ENCODE measurements at regions of chr1 and their contacts with region 1.

Region 1: GRCh38 chr1:116472431-116472961 is 98.3 kb downstream of the CD58 start:
- DNase-seq: no peak
- ATAC-seq: no peak
- H3K4me3 ChIP-seq: no peak overlapping the region
- H3K27ac ChIP-seq: no peak overlapping the region
- H3K4me1 ChIP-seq: peaks cover 27 to 32% of the 10 kb centered on the region in 2 donors
- H3K27me3 ChIP-seq: no peaks in the 10 kb centered on the region
- CTCF ChIP-seq: no peak
- POLR2A ChIP-seq: no peak

Region 2: DNA sequence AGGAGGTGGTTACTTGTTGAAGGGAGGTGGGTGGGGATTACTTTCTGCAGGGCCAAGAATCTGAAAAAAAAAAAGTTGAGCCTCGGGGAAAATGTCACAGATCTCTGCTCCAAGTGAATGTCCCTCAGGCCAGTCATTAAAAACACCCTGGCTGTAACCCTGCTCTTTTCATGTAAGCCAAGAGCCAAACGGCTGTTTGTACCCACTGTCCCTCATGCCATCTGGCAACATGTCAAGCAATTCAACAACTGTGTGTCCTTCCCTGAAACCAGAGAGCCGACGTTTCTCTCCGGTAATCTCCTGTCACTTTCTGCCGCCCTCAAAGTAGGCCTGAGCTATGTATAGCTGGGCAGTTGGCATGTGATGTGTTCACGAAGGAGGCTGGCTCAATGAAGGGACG is 718.7 kb before region 1 on chr1:
- in situ Hi-C with region 1: no loop called
- intact Hi-C with region 1: loop called (anchors 10 kb)
- DNase-seq: peak; percentile 94
- ATAC-seq: peak; percentile 89 to 90
- H3K4me3 ChIP-seq: peak overlapping the region in 2 of 4 donors; percentile 3 to 13
- H3K27ac ChIP-seq: peak overlapping the region; percentile 87 to 91 (median 90)
- H3K4me1 ChIP-seq: peaks cover 65 to 78% of the 10 kb centered on the region in 2 donors
- H3K27me3 ChIP-seq: no peaks in the 10 kb centered on the region
- CTCF ChIP-seq: no peak
- POLR2A ChIP-seq: peak in 1 of 2 donors; percentile 42

Region 3: DNA sequence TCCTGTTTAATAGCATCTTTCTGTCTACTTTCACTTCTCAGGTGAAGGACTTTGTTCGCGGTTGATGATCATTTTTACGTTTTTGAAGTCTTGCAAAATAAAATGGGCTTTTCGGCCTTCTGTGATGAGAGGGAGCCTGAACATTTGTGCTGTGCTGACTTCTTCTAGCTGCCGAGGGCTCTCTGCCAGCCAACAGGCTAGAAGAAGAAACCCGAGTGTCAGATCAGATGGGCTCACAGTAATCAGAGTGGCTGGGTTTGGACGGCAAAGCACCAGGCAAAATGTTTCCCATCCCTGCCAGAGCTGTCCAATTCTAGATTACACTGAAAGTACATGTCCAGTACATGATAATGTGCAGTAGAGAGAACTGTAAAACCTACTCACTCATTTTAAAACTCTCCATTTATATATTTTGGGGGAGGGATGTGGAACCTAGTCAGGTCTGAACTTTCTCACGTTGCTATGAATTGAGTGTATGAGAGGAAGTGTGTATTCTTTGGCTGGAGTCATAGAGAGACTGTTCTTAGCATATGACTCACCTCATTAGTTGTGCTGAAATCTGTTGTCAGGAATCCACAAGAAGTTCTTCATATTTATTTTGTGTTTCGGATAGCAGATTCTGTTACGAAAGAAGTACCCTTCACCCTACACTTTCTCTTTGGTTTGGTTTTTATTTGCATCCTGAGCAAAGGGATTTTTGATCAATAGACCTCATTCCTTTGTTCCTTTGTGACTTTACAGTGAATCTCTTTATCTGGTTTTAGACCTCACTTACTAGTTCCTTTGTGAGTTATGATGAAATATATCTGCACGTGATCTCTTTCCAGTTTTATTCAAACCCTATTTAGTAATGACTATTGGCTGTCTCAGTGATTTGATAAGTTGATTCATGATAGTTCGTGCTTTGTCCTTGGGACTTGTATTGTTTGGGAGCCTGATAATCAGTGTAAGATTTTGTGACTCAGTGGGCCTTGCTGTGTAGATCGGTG is 94.7 kb before region 1 on chr1:
- in situ Hi-C with region 1: loop called in 1 of 4 experiments (anchors 25 kb)
- intact Hi-C with region 1: loop called (anchors 1 kb)
- DNase-seq: peak; percentile 77 to 88
- ATAC-seq: peak; percentile 64 to 70
- H3K4me3 ChIP-seq: peak overlapping the region; percentile 8 to 84 (median 26)
- H3K27ac ChIP-seq: peak overlapping the region; percentile 94 to 98 (median 96)
- H3K4me1 ChIP-seq: peaks cover 69 to 85% of the 10 kb centered on the region in 2 donors
- H3K27me3 ChIP-seq: no peaks in the 10 kb centered on the region
- CTCF ChIP-seq: no peak
- POLR2A ChIP-seq: peak; percentile 74 to 75

Region 4: DNA sequence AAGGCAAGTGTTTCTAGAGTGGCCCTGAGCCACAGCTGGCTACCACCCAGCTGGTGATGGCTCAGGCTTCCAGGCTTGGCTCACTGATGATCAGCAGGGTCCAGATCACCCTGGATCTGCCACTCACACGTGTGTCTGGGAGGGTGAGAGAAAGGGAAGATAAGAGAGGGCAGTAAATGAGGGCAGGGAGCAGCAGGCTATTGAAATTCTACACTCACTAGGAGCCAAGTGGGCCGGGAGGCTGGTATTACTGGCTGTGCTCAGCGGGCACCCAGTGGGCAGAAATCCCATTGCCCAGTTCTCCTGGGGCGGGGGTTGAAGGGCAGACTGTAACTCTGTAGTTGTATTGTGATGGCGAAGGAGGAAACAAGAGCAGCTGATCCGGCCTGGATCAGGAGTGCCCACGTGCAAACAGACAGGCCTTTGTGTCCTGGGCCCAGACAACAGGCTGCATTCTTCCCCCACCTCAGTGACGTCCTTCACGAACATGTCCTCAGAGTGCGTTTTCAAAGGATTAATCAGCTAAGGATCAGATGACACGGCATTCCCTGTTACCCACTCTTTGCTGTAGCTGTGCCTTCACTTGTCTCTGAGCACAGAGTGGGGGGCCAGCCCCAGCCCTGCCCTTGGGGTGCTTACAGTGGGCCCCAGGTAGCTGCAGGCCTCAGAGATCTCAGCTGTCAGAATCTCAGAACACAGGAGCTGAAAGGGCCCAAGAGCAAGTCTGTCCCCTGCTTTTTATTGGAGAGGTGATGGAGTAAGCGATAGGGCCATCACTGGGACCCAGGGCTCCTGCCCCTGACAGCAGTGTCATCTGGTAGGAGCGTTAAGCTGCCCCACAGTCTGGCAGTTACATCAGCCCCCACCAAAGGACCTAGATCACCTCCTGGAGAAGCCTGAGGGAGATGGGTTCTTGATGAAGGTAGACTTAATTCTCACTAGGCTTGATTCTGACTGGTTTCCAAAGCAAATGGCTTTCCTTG is 38.9 kb before region 1 on chr1:
- in situ Hi-C with region 1: no loop called
- intact Hi-C with region 1: loop called (anchors 1 kb)
- DNase-seq: peak; percentile 82 to 86
- ATAC-seq: peak; percentile 88 to 89
- H3K4me3 ChIP-seq: peak overlapping the region in 1 of 4 donors; percentile 7
- H3K27ac ChIP-seq: peak overlapping the region; percentile 74 to 92 (median 88)
- H3K4me1 ChIP-seq: peaks cover 11% of the 10 kb centered on the region in 2 donors
- H3K27me3 ChIP-seq: no peaks in the 10 kb centered on the region
- CTCF ChIP-seq: no peak
- POLR2A ChIP-seq: peak; percentile 29 to 52

Region 5: DNA sequence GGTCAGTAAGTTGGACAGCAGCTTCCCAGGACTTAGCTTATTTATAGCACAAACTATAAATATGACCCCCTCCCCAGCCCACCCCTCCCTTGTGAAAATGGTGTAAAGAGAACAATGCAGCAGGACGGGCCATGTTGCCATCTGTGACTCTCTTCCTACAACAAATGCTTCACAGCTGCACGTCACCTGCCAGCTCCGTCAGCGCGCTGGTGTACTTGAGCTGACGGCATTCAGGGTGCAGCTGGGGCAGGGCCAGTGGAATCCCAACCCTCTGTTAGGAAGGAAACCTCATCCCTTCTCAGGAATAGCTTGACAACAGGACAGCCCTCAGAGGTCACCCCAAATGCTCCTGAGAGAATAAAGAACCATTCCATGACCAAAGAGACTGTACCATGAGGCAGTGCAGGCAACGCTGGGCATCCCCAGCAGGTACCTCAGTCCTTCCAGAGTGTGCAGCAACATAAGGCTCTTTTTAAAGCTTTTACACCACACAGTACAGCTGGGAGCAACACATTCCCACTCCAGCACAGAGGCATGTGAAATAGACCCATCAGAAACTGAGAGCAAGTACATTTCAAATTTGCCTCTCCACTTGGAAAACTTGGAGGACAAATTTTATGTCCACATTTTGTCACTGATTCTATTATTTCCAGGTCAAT is 14.4 kb before region 1 on chr1:
- in situ Hi-C with region 1: no loop called
- intact Hi-C with region 1: loop called (anchors 2 kb)
- DNase-seq: peak; percentile 50 to 67
- ATAC-seq: peak; percentile 53 to 85
- H3K4me3 ChIP-seq: no peak overlapping the region
- H3K27ac ChIP-seq: peak overlapping the region; percentile 54 to 76 (median 63)
- H3K4me1 ChIP-seq: peaks cover 0 to 6% of the 10 kb centered on the region in 2 donors
- H3K27me3 ChIP-seq: no peaks in the 10 kb centered on the region
- CTCF ChIP-seq: no peak
- POLR2A ChIP-seq: no peak

Measured in gastrocnemius medialis (tissue), 4 donors.